Activated naive CD4-positive, alpha-beta T cell treated with anti-CD3 and anti-CD28 coated beads, Interleukin-2, amount 10 ng/mL, durations not matched to agents 7 days and 5 days (primary cell): ENCODE measurements at regions of chr9 and their contacts with region 1.

Region 1: DNA sequence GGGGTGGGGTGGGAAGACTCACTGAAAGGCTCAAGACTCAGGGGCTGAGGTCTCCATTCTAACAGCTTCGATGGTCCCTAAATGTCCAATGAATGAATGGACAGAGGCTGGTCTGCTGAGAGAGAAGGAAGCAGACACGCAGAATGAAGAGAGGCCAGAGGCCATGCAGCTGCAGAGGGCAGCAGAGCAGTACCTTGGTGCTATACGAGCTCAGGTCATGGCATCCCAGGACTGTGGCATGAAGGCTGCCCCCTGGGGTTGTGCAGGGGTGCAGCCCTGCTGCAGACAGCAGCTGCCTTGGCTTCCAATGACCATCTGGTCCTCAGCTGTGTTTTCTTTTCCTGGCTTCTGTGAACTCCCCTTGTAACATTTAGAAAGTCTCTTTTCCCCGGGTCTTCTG is 15.2 kb upstream of the CORO2A start:
- DNase-seq: no peak
- H3K4me3 Mint-ChIP-seq: no peak overlapping the region
- H3K27ac Mint-ChIP-seq: no peak overlapping the region
- H3K4me1 Mint-ChIP-seq: peaks cover 7% of the 10 kb centered on the region
- H3K27me3 Mint-ChIP-seq: no peaks in the 10 kb centered on the region

Region 2: GRCh38 chr9:98192503-98193335 is 14.9 kb before region 1 on chr9 and contains the start of gene CORO2A:
- CTCF ChIA-PET with region 1: interaction called, 14 read pairs
- DNase-seq: peak; percentile 79
- H3K4me3 Mint-ChIP-seq: peak within 1 kb of the TSS; percentile 79
- H3K27ac Mint-ChIP-seq: peak within 1 kb of the TSS; percentile 78
- H3K4me1 Mint-ChIP-seq: peaks cover 32% of the 10 kb centered on the region
- H3K27me3 Mint-ChIP-seq: peaks cover 15% of the 10 kb centered on the region

Region 3: GRCh38 chr9:98263482-98264357 is 56.1 kb after region 1 on chr9:
- CTCF ChIA-PET with region 1: interaction called, 26 read pairs
- DNase-seq: peak; percentile 93
- H3K4me3 Mint-ChIP-seq: no peak overlapping the region
- H3K27ac Mint-ChIP-seq: no peak overlapping the region
- H3K4me1 Mint-ChIP-seq: peaks cover 2% of the 10 kb centered on the region
- H3K27me3 Mint-ChIP-seq: peaks cover 8% of the 10 kb centered on the region

Region 4: GRCh38 chr9:98356326-98356725 is 148.7 kb after region 1 on chr9:
- CTCF ChIA-PET with region 1: no interaction called
- DNase-seq: no peak
- H3K4me3 Mint-ChIP-seq: no peak overlapping the region
- H3K27ac Mint-ChIP-seq: no peak overlapping the region
- H3K4me1 Mint-ChIP-seq: no peaks in the 10 kb centered on the region
- H3K27me3 Mint-ChIP-seq: peaks cover 20% of the 10 kb centered on the region